ENCODE measurements at regions of chr5 and their contacts with region 1.

Region 1: GRCh38 chr5:177607452-177608192 is 7.7 kb downstream of the B4GALT7 start:
- DNase-seq: peak; percentile 43
- ATAC-seq: peak; percentile 86
- H3K4me3 Mint-ChIP-seq: no peak overlapping the region
- H3K27ac Mint-ChIP-seq: no peak overlapping the region
- H3K4me1 Mint-ChIP-seq: peaks cover 19% of the 10 kb centered on the region
- H3K27me3 Mint-ChIP-seq: no peaks in the 10 kb centered on the region
- CTCF ChIP-seq: no peak

Region 2: GRCh38 chr5:177578331-177578730 is 29.3 kb before region 1 on chr5:
- CTCF ChIA-PET with region 1: no interaction called
- POLR2A ChIA-PET with region 1: no interaction called
- intact Hi-C with region 1: no loop called
- DNase-seq: no peak
- ATAC-seq: no peak
- H3K4me3 Mint-ChIP-seq: no peak overlapping the region
- H3K27ac Mint-ChIP-seq: no peak overlapping the region
- H3K4me1 Mint-ChIP-seq: no peaks in the 10 kb centered on the region
- H3K27me3 Mint-ChIP-seq: no peaks in the 10 kb centered on the region
- CTCF ChIP-seq: no peak

Region 3: DNA sequence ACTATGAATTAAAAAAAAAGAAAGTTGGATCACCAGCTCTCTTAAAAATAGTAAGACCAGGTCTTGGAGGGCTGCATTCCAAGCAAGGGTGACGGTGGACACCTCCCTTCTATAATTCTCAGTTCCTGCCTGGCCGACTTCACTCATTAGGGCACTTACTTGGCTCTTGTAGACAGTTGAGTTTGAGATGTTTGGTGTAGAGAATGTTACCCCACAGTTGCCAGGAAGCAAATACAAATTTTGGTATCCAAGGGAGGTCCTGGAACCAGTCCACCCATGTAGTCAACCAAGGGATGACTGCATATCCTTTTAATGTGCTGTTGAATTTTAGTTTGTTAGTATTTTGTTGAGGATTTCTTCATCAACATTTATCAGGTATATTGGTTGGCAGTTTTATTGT is 12.9 kb after region 1 on chr5:
- CTCF ChIA-PET with region 1: no interaction called
- POLR2A ChIA-PET with region 1: no interaction called
- intact Hi-C with region 1: no loop called
- DNase-seq: no peak
- ATAC-seq: no peak
- H3K4me3 Mint-ChIP-seq: no peak overlapping the region
- H3K27ac Mint-ChIP-seq: no peak overlapping the region
- H3K4me1 Mint-ChIP-seq: no peaks in the 10 kb centered on the region
- H3K27me3 Mint-ChIP-seq: no peaks in the 10 kb centered on the region
- CTCF ChIP-seq: no peak

Region 4: DNA sequence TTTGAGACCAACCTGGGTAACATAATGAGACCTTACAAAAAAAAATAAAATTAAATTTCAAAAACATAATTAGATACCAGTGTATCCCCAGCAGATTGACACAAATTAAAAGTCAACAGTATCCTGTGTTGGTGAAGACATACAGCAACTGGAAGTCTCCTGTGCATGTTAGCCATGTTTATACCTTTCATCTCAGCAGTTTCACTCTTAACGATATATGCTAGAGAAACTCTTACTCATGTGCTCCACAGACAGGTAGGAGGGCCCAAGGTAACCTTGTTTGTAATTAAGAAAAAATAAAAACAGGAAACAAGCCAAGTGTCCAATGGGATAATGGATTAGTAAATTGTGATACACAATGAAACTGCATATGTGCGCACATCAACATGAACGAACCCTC is 455.7 kb after region 1 on chr5:
- CTCF ChIA-PET with region 1: no interaction called
- POLR2A ChIA-PET with region 1: no interaction called
- intact Hi-C with region 1: loop called (anchors 2 kb)
- DNase-seq: no peak
- ATAC-seq: no peak
- H3K4me3 Mint-ChIP-seq: no peak overlapping the region
- H3K27ac Mint-ChIP-seq: no peak overlapping the region
- H3K4me1 Mint-ChIP-seq: peaks cover 13% of the 10 kb centered on the region
- H3K27me3 Mint-ChIP-seq: peaks cover 6% of the 10 kb centered on the region
- CTCF ChIP-seq: no peak

Measured in activated B cell treated with CpG ODN at 0.5 μM for 24 hours (primary cell).